ENCODE measurements at regions of chr3 and their contacts with region 1.

Region 1: GRCh38 chr3:134485718-134486576 is at the starts of genes ANAPC13 and CEP63:
- DNase-seq: peak; percentile 97
- H3K4me3 Mint-ChIP-seq: peak within 1 kb of the TSS; percentile 87
- H3K27ac Mint-ChIP-seq: peak within 1 kb of the TSS; percentile 98
- H3K4me1 Mint-ChIP-seq: peaks cover 45% of the 10 kb centered on the region
- H3K27me3 Mint-ChIP-seq: no peaks in the 10 kb centered on the region
- total RNA-seq, gene ANAPC13: 42.6 to 44.7 TPM
- total RNA-seq, gene CEP63: 26.9 to 27.0 TPM

Region 2: GRCh38 chr3:132659365-132660051 is 1826.4 kb before region 1 on chr3 and contains the start of gene ACAD11:
- CTCF ChIA-PET with region 1: no interaction called
- intact Hi-C with region 1: loop called (anchors 5 kb)
- DNase-seq: peak; percentile 64
- H3K4me3 Mint-ChIP-seq: peak within 1 kb of the TSS; percentile 95
- H3K27ac Mint-ChIP-seq: peak within 1 kb of the TSS; percentile 94
- H3K4me1 Mint-ChIP-seq: peaks cover 44% of the 10 kb centered on the region
- H3K27me3 Mint-ChIP-seq: no peaks in the 10 kb centered on the region
- total RNA-seq, gene ACAD11: 11.2 to 11.4 TPM

Region 3: GRCh38 chr3:133661454-133662277 is 824.3 kb before region 1 on chr3 and contains the start of gene TOPBP1:
- CTCF ChIA-PET with region 1: no interaction called
- intact Hi-C with region 1: loop called (anchors 2 kb)
- DNase-seq: peak; percentile 94
- H3K4me3 Mint-ChIP-seq: peak within 1 kb of the TSS; percentile 98
- H3K27ac Mint-ChIP-seq: peak within 1 kb of the TSS; percentile 98
- H3K4me1 Mint-ChIP-seq: peaks cover 28% of the 10 kb centered on the region
- H3K27me3 Mint-ChIP-seq: no peaks in the 10 kb centered on the region
- total RNA-seq, gene TOPBP1: 65.4 to 65.8 TPM

Region 4: GRCh38 chr3:133927540-133928066 is 558.3 kb before region 1 on chr3:
- CTCF ChIA-PET with region 1: no interaction called
- intact Hi-C with region 1: loop called (anchors 5 kb)
- DNase-seq: peak; percentile 60
- H3K4me3 Mint-ChIP-seq: no peak overlapping the region
- H3K27ac Mint-ChIP-seq: no peak overlapping the region
- H3K4me1 Mint-ChIP-seq: peaks cover 6% of the 10 kb centered on the region
- H3K27me3 Mint-ChIP-seq: peaks cover 2% of the 10 kb centered on the region

Region 5: DNA sequence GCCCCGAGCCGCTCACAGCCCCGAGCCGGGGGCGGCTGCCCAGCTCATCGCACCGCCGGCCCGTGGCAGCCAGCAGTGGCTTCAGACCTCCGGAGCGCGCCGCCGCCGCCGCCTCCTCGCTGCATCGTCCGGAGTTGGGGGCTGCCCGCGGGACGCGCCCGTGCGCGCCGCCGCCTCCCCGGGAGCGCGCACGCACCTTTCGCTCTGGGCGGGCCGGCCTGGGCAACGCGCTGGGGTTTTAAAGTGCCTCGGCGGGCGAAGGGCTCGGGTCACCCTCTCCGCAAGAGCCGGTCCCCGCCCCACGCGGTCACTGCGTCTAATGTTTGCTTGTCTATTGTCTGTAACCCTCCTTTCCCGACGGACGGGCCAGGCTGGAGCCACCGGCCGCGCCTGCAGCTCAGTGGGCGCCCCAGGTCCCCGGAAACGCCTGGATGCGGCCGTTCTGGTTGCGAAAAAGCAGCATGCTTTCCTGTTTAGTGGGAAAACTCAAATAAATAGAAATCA is 235.2 kb before region 1 on chr3 and contains the start of gene RYK:
- CTCF ChIA-PET with region 1: interaction called, 3 read pairs
- intact Hi-C with region 1: loop called (anchors 1 kb)
- DNase-seq: peak; percentile 70
- H3K4me3 Mint-ChIP-seq: peak within 1 kb of the TSS; percentile 95
- H3K27ac Mint-ChIP-seq: peak within 1 kb of the TSS; percentile 90
- H3K4me1 Mint-ChIP-seq: peaks cover 57% of the 10 kb centered on the region
- H3K27me3 Mint-ChIP-seq: no peaks in the 10 kb centered on the region
- total RNA-seq, gene RYK: 19.5 to 19.7 TPM

Region 6: GRCh38 chr3:134473868-134474546 is 11.9 kb before region 1 on chr3:
- CTCF ChIA-PET with region 1: interaction called, 59 read pairs
- intact Hi-C with region 1: no loop called
- DNase-seq: peak; percentile 91
- H3K4me3 Mint-ChIP-seq: no peak overlapping the region
- H3K27ac Mint-ChIP-seq: no peak overlapping the region
- H3K4me1 Mint-ChIP-seq: no peaks in the 10 kb centered on the region
- H3K27me3 Mint-ChIP-seq: no peaks in the 10 kb centered on the region

Region 7: GRCh38 chr3:134618478-134619300 is 132.7 kb after region 1 on chr3:
- CTCF ChIA-PET with region 1: no interaction called
- intact Hi-C with region 1: no loop called
- DNase-seq: no peak
- H3K4me3 Mint-ChIP-seq: no peak overlapping the region
- H3K27ac Mint-ChIP-seq: no peak overlapping the region
- H3K4me1 Mint-ChIP-seq: no peaks in the 10 kb centered on the region
- H3K27me3 Mint-ChIP-seq: no peaks in the 10 kb centered on the region

Region 8: DNA sequence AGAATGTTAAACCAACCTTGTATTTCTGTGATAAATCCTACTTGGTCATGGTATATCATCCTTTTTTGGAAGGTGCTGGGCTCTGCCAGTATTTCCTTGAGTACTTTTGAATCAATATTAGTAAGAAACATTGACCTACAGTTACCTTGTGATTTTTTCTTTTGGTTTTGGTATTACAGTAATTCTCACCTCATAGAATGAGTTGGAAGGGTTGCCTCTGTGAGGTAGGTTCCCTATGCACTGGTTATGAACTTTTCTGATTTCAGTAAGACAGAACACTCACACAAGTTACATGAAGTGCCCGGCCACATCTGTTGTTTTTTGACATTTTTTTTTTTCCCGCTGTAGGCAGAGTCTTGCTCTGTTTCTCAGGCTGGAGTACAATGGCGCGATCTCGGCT is 1784.2 kb after region 1 on chr3:
- CTCF ChIA-PET with region 1: no interaction called
- intact Hi-C with region 1: loop called (anchors 5 kb)
- DNase-seq: peak; percentile 18
- H3K4me3 Mint-ChIP-seq: no peak overlapping the region
- H3K27ac Mint-ChIP-seq: no peak overlapping the region
- H3K4me1 Mint-ChIP-seq: peaks cover 35% of the 10 kb centered on the region
- H3K27me3 Mint-ChIP-seq: no peaks in the 10 kb centered on the region